AG04450 (cell line): ENCODE measurements at regions of chr4 and their contacts with region 1.

Region 1: GRCh38 chr4:15665753-15666365 is 10.7 kb upstream of the FBXL5 start:
- DNase-seq: no peak
- H3K4me3 ChIP-seq: no peak overlapping the region
- H3K27ac ChIP-seq: no peak overlapping the region
- H3K27me3 ChIP-seq: no peaks in the 10 kb centered on the region
- CTCF ChIP-seq: no peak

Region 2: GRCh38 chr4:15690020-15690809 is 24.4 kb after region 1 on chr4:
- CTCF ChIA-PET with region 1: no interaction called
- POLR2A ChIA-PET with region 1: no interaction called
- DNase-seq: peak; percentile 65
- H3K4me3 ChIP-seq: no peak overlapping the region
- H3K27ac ChIP-seq: peak overlapping the region; percentile 72
- H3K27me3 ChIP-seq: no peaks in the 10 kb centered on the region
- CTCF ChIP-seq: no peak

Region 3: DNA sequence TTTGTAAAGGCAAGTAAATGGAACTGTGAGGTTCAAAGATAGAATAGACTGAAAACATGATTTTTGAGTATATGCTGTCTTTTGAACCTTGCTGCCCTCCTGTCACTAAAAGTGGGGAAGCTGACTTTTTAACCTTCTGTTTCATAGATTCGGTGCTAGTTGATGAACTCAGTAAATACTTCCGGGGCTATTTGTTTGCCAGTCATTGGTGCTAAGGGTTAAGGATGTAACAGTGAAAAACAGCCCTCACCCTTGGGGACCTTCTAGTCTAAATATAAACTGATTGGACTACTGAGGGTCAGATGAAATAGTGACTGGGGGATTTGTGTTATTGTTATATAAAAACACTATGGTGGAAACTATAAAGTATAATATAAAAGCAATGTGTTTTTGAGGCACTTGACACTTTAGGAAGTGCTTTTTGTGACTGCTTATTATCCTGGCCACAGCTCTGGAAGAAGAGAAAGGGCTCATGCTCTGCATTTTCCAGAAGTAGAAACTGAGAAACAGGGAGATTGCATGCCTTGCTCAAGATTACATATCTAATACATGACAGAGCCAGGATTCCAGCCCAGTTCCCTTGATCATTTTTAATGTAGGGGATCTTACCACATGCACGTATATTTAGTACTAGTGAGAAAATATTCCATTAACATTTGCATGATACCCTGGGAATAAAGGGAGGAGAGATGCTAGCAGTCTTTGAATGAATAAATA is 40.9 kb after region 1 on chr4:
- CTCF ChIA-PET with region 1: no interaction called
- POLR2A ChIA-PET with region 1: interaction called, 12 read pairs
- DNase-seq: no peak
- H3K4me3 ChIP-seq: no peak overlapping the region
- H3K27ac ChIP-seq: no peak overlapping the region
- H3K27me3 ChIP-seq: no peaks in the 10 kb centered on the region
- CTCF ChIP-seq: no peak

Region 4: DNA sequence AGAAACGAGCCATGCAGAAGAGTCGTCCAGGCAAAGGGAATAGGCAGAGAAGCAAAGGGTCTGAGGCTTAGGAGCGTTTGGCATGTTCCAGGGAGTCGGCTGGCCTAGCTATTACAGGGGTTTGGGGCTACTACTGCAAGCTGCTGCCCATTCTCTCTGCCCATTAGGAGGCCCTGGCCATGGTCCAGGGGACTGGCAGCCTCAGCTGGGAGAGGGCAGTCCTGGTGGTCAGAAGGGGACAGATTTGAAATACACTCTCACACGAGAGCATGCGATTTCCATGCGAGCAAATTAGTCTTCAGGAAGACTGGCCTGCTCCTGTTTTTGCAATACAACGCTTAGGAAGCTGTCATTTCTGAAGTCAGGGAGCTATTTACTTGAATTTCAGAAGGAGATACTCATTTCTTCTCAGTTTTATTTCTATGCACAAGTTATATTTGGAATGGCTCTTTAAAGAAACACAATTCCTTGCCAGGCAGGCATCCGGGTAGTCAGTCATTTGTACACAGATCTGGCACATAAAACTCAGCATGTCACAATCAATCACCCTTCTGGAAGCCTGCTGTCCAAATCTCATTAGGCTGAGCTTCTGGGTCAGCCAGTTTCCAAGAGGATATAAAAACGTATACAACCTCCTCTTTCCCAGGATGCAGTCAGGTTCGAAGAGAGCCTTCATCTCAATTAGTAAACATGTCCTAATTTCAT is 391.0 kb after region 1 on chr4:
- CTCF ChIA-PET with region 1: no interaction called
- POLR2A ChIA-PET with region 1: no interaction called
- DNase-seq: no peak
- H3K4me3 ChIP-seq: no peak overlapping the region
- H3K27ac ChIP-seq: no peak overlapping the region
- H3K27me3 ChIP-seq: peaks cover 26% of the 10 kb centered on the region
- CTCF ChIP-seq: no peak

Region 5: GRCh38 chr4:16472537-16472936 is 806.7 kb after region 1 on chr4:
- CTCF ChIA-PET with region 1: no interaction called
- POLR2A ChIA-PET with region 1: no interaction called
- DNase-seq: no peak
- H3K4me3 ChIP-seq: no peak overlapping the region
- H3K27ac ChIP-seq: no peak overlapping the region
- H3K27me3 ChIP-seq: peaks cover 4% of the 10 kb centered on the region
- CTCF ChIP-seq: no peak